Naive thymus-derived CD4-positive, alpha-beta T cell (primary cell): ENCODE measurements at regions of chr17 and their contacts with region 1.

Region 1: GRCh38 chr17:57255776-57256681 is at the start of gene MSI2:
- DNase-seq: peak; percentile 80 to 93 (median 85)
- ATAC-seq: peak; percentile 89
- H3K4me3 ChIP-seq: peak within 1 kb of the TSS; percentile 87
- H3K4me3 Mint-ChIP-seq: peak within 1 kb of the TSS; percentile 90 to 100 (median 96)
- H3K27ac ChIP-seq: peak within 1 kb of the TSS; percentile 83
- H3K27ac Mint-ChIP-seq: peak within 1 kb of the TSS; percentile 85 to 98 (median 91)
- H3K4me1 ChIP-seq: peaks cover 13 to 28% of the 10 kb centered on the region in 2 donors
- H3K4me1 Mint-ChIP-seq: peaks cover 21 to 57% (median 46%) of the 10 kb centered on the region in 7 donors
- H3K27me3 ChIP-seq: no peaks in the 10 kb centered on the region
- H3K27me3 Mint-ChIP-seq: peaks cover 0 to 4% (median 0%) of the 10 kb centered on the region in 5 donors
- total RNA-seq, gene MSI2: 111 to 169 (median 150) TPM

Region 2: DNA sequence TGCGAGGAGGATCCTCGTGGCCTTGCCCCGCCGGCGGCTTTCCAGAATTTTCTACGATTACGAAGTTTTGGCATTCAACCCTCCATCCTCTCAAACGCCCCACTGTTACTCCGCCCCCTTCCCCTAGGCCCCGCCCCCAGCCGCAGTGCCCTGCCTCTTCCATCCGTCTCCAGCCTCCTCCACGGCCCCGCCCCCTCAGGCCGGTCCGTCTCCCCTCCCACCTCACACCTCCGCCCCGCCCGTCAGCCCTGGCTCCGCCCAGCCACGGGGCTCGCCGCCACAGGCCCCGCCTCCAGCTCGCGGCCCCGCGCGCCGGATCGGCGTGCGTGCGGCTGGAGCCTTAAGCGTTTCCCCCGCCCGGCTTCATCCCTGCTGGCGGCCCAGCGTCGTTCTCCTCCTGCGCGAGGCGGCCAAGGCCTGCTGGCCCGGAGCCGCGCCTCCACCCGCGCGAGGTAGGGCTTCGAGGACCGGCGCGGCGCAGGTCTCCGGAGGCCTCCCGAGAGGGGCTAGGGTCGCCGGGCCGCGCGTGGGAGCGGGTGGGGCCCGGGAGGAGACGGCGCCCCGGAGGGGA is 422.1 kb before region 1 on chr17 and contains the starts of genes C17orf67 and DGKE:
- CTCF ChIA-PET with region 1: no interaction called
- POLR2A ChIA-PET with region 1: no interaction called
- intact Hi-C with region 1: loop called in 1 of 2 experiments (anchors 5 kb)
- DNase-seq: peak; percentile 95 to 100 (median 98)
- ATAC-seq: peak; percentile 97
- H3K4me3 ChIP-seq: peak within 1 kb of the TSS; percentile 91
- H3K4me3 Mint-ChIP-seq: peak within 1 kb of the TSS; percentile 91 to 98 (median 95)
- H3K27ac ChIP-seq: peak within 1 kb of the TSS; percentile 85
- H3K27ac Mint-ChIP-seq: peak within 1 kb of the TSS; percentile 83 to 95 (median 93)
- H3K4me1 ChIP-seq: peaks cover 41 to 42% of the 10 kb centered on the region in 2 donors
- H3K4me1 Mint-ChIP-seq: peaks cover 34 to 74% (median 62%) of the 10 kb centered on the region in 7 donors
- H3K27me3 ChIP-seq: no peaks in the 10 kb centered on the region
- H3K27me3 Mint-ChIP-seq: no peaks in the 10 kb centered on the region
- total RNA-seq, gene C17orf67: 3.6 to 9.1 (median 5.4) TPM
- total RNA-seq, gene DGKE: 23.7 to 39.2 (median 35.6) TPM

Region 3: DNA sequence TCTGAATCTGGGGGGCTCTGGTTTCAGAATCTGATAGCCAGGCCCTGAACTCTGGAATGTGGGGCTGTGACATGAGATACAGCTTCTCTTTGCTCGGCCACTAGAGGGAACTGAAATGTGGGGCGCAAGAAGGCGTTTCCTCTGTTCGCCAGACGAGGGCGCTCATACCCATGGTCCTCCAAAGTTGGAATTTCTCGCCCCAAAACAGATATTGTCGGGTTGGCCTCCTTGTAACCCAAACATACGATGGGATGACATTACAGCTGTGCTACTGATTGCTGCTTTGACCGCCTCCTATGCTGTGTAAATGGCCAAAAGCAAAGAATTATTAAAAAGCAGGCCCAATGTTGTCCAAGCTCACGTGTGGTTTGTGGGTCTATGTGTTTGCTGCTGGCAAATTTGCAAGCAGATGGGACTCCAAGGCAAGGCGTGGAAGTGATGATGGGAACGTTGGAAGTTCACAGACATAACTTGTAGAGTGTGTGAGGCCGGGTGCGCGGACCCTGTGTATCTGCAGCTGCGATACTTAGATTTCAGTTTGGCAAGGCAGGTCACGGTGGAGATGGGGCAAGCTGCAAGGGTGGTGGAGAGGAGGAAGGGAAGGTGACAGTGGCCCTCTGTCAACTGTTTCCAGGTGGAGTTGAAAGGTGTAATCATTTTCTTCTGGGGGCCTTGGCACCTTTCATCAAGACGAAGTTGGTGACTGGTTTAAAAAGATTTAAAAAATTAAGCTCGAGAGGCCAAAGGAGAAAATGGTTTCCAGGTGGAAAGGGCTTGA is 12.7 kb before region 1 on chr17:
- CTCF ChIA-PET with region 1: interaction called, 19 read pairs
- POLR2A ChIA-PET with region 1: interaction called, 7 read pairs
- intact Hi-C with region 1: loop called in 1 of 2 experiments (anchors 1 kb)
- DNase-seq: peak; percentile 52 to 78 (median 68)
- ATAC-seq: peak; percentile 99
- H3K4me3 ChIP-seq: no peak overlapping the region
- H3K4me3 Mint-ChIP-seq: no peak overlapping the region
- H3K27ac ChIP-seq: no peak overlapping the region
- H3K27ac Mint-ChIP-seq: peak overlapping the region in 1 of 9 donors; percentile 36
- H3K4me1 ChIP-seq: no peaks in the 10 kb centered on the region
- H3K4me1 Mint-ChIP-seq: peaks cover 0 to 13% (median 0%) of the 10 kb centered on the region in 7 donors
- H3K27me3 ChIP-seq: no peaks in the 10 kb centered on the region
- H3K27me3 Mint-ChIP-seq: peaks cover 2 to 33% (median 5%) of the 10 kb centered on the region in 5 donors

Region 4: GRCh38 chr17:57294629-57295535 is 38.9 kb after region 1 on chr17:
- CTCF ChIA-PET with region 1: no interaction called
- POLR2A ChIA-PET with region 1: no interaction called
- intact Hi-C with region 1: loop called in 1 of 2 experiments (anchors 1 kb)
- DNase-seq: peak in 3 of 9 donors; percentile 11 to 31 (median 15)
- ATAC-seq: peak; percentile 70
- H3K4me3 ChIP-seq: no peak overlapping the region
- H3K4me3 Mint-ChIP-seq: peak overlapping the region in 9 of 10 donors; percentile 21 to 72 (median 30)
- H3K27ac ChIP-seq: no peak overlapping the region
- H3K27ac Mint-ChIP-seq: peak overlapping the region; percentile 1 to 81 (median 64)
- H3K4me1 ChIP-seq: peaks cover 0 to 6% of the 10 kb centered on the region in 2 donors
- H3K4me1 Mint-ChIP-seq: peaks cover 32 to 63% (median 45%) of the 10 kb centered on the region in 7 donors
- H3K27me3 ChIP-seq: no peaks in the 10 kb centered on the region
- H3K27me3 Mint-ChIP-seq: no peaks in the 10 kb centered on the region

Region 5: DNA sequence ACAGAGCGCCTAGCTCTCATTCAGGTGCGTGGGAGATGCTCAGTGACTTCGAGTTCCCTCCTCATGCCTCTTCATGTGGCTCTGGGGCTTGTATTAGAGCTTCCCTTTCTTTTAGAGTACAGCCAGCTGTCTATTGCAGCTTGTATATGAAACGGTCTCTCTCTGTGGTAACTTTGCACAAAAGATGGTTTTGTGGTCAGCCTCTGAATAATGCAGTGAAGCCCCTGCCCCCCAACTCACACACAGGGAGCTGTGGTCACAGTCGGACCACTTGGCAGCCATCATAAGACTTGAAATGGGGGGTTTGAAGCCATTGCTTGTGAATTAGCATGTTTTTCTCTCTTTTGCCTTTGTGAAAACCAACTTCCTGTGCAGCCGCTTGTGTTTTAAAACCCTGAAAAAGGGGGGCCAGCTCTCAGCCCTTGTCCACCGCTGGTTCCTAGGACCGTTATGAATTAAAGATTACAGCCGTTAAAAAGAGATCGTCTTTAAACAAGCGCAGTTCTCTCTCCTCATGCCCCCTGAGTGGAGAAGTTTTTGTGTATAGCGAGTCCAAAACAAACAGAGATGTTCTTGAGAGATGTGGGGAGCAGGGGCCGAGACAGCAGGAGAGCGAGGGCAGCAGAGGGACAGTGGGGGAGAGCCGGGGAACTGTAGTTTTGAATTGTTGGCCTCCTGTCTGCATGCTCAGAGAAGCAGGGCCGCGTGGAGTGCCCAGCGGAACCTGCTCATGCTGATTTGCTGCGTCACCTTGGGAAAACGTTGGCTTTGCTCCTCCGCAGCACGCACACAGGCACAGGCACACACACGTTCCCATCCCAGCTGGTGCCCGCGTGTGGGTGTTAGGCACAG is 199.3 kb after region 1 on chr17:
- CTCF ChIA-PET with region 1: no interaction called
- POLR2A ChIA-PET with region 1: no interaction called
- intact Hi-C with region 1: loop called in 1 of 2 experiments (anchors 5 kb)
- DNase-seq: peak in 8 of 9 donors; percentile 19 to 57 (median 40)
- ATAC-seq: peak; percentile 78
- H3K4me3 ChIP-seq: peak overlapping the region; percentile 28
- H3K4me3 Mint-ChIP-seq: peak overlapping the region; percentile 70 to 87 (median 80)
- H3K27ac ChIP-seq: peak overlapping the region; percentile 48
- H3K27ac Mint-ChIP-seq: peak overlapping the region; percentile 62 to 94 (median 87)
- H3K4me1 ChIP-seq: peaks cover 40 to 44% of the 10 kb centered on the region in 2 donors
- H3K4me1 Mint-ChIP-seq: peaks cover 45 to 69% (median 64%) of the 10 kb centered on the region in 7 donors
- H3K27me3 ChIP-seq: no peaks in the 10 kb centered on the region
- H3K27me3 Mint-ChIP-seq: no peaks in the 10 kb centered on the region

Region 6: DNA sequence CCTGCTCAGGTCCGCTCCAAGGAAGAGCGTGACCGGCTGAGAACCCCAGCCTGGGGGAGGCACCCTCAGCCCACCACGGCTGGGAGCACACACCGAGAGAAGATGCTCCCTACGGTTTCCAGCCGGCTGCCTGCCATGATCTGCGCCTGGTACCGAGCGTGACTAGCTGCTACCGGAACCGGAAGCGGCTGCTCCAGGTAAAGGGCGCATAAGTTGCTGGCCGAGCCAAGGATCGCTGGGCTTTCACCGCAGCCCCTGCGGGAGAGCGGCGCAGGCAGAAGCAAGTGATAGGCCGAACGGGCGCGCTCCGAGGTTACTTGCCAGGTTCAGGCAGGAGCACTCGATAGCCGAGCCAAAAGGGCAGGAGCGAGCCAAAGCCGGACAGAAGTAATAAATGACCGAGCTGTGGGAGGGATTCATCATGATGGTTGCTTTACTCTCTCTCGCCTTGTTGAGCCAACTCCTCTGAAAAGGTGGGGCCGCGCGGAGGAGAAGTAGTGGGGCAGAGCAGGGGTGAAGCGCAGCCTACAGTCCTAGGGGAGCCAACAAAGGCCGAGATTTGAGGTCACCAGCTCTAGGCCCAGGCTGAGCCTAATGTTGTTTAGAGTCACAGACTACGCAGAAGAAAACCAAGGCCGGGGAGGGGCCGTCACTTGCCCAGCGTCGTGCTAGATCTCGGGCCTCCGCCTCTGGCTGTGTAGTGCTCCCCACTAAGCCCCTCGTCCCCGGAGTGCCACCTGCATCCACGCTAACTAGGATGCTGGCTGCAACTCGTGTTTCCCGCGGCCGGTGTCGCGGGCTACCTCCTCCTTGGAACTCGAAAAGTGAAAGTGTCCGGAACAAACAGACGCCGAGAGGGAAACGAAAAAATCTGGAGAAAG is 594.1 kb after region 1 on chr17 and contains the start of gene MRPS23:
- CTCF ChIA-PET with region 1: no interaction called
- POLR2A ChIA-PET with region 1: no interaction called
- intact Hi-C with region 1: loop called in 1 of 2 experiments (anchors 1 kb)
- DNase-seq: peak; percentile 85 to 98 (median 94)
- ATAC-seq: peak; percentile 99
- H3K4me3 ChIP-seq: peak within 1 kb of the TSS; percentile 88
- H3K4me3 Mint-ChIP-seq: peak within 1 kb of the TSS; percentile 92 to 100 (median 99)
- H3K27ac ChIP-seq: peak within 1 kb of the TSS; percentile 86
- H3K27ac Mint-ChIP-seq: peak within 1 kb of the TSS; percentile 97 to 100 (median 100)
- H3K4me1 ChIP-seq: peaks cover 20 to 27% of the 10 kb centered on the region in 2 donors
- H3K4me1 Mint-ChIP-seq: peaks cover 24 to 61% (median 49%) of the 10 kb centered on the region in 7 donors
- H3K27me3 ChIP-seq: no peaks in the 10 kb centered on the region
- H3K27me3 Mint-ChIP-seq: no peaks in the 10 kb centered on the region
- total RNA-seq, gene MRPS23: 13.0 to 40.5 (median 24.6) TPM